ENCODE measurements at regions of chr1 and their contacts with region 1.

Region 1: GRCh38 chr1:24642481-24643361 is at the start of gene SRRM1:
- DNase-seq: peak; percentile 96 to 100 (median 99)
- ATAC-seq: peak; percentile 93
- H3K4me3 ChIP-seq: peak within 1 kb of the TSS; percentile 83
- H3K4me3 Mint-ChIP-seq: peak within 1 kb of the TSS; percentile 88 to 100 (median 95)
- H3K27ac ChIP-seq: peak within 1 kb of the TSS; percentile 100
- H3K27ac Mint-ChIP-seq: peak within 1 kb of the TSS; percentile 95 to 100 (median 99)
- H3K4me1 ChIP-seq: peaks cover 26 to 32% of the 10 kb centered on the region in 2 donors
- H3K4me1 Mint-ChIP-seq: peaks cover 26 to 58% (median 51%) of the 10 kb centered on the region in 7 donors
- H3K27me3 ChIP-seq: no peaks in the 10 kb centered on the region
- H3K27me3 Mint-ChIP-seq: peaks cover 0 to under 1% (median 0%) of the 10 kb centered on the region in 5 donors
- total RNA-seq, gene SRRM1: 188 to 342 (median 246) TPM

Region 2: DNA sequence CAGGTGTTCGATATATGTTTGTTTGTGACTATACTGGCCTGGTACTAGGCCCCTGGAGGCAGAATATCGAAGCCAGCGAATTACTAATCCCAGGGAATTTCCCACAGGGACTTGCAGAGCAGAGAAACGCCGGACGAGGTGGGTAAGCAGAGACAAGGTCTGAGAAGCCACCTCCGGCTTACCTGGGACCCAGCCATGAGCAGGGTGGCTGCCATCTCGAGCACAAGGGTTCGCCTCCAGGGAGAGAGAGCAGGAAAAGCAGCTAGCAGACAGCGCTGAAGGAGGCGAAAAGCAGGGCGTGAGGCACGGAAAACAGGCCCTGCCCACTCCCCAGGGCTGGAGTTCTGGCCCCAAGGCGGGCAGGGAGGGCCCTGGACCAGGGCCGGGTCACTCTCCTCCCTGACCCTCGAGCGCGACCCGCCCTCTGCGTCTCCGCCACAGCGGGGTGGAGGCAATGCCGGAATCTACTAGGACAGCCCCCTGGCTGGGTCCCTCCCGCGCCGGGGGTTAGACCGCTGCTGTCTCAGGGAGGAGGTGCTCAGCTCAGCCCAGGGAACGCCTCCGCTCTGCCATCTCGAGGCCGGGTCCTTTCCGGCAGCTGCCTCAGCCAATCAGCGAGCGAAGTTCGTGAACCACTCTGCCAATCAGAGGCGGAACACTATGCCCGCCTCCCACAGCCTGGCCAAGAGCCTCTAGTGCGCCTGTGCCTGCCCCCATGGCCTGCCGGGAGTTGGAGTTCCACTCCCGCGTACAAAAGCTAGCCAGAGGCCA is 1274.7 kb before region 1 on chr1:
- CTCF ChIA-PET with region 1: no interaction called
- POLR2A ChIA-PET with region 1: no interaction called
- intact Hi-C with region 1: loop called in 1 of 2 experiments (anchors 1 kb)
- DNase-seq: peak; percentile 84 to 98 (median 96)
- ATAC-seq: peak; percentile 95
- H3K4me3 ChIP-seq: peak overlapping the region; percentile 100
- H3K4me3 Mint-ChIP-seq: peak overlapping the region; percentile 87 to 100 (median 97)
- H3K27ac ChIP-seq: peak overlapping the region; percentile 91
- H3K27ac Mint-ChIP-seq: peak overlapping the region; percentile 93 to 99 (median 97)
- H3K4me1 ChIP-seq: peaks cover 6 to 8% of the 10 kb centered on the region in 2 donors
- H3K4me1 Mint-ChIP-seq: peaks cover 25 to 41% (median 36%) of the 10 kb centered on the region in 7 donors
- H3K27me3 ChIP-seq: no peaks in the 10 kb centered on the region
- H3K27me3 Mint-ChIP-seq: no peaks in the 10 kb centered on the region

Region 3: DNA sequence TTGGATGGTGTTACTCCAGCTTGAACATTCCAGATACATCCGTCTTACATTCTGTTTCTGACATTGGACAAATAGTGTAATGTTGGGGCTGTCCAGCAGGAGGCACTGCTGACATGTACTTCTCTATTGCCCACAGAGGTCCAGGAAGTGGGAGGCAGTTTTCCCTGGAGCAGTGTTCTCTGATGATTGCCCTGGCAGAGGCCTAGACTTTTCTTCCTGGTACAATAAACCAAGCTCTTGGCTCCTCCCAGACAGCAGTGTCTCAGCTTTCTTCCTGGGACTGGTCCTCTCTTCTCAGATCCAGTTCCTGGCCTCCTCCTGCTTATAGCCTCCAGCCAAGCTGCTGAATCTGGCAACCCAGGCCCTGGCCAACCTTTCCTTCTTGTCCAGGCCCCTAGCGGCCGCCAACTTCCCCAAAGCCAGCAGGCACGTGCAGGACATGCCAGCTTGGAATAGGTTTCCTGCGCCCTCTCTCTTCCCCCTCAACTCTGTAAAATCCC is 440.7 kb before region 1 on chr1:
- CTCF ChIA-PET with region 1: interaction called, 14 read pairs
- POLR2A ChIA-PET with region 1: no interaction called
- intact Hi-C with region 1: no loop called
- DNase-seq: peak in 7 of 9 donors; percentile 29 to 54 (median 42)
- ATAC-seq: peak; percentile 53
- H3K4me3 ChIP-seq: no peak overlapping the region
- H3K4me3 Mint-ChIP-seq: no peak overlapping the region
- H3K27ac ChIP-seq: no peak overlapping the region
- H3K27ac Mint-ChIP-seq: no peak overlapping the region
- H3K4me1 ChIP-seq: peaks cover 0 to 4% of the 10 kb centered on the region in 2 donors
- H3K4me1 Mint-ChIP-seq: peaks cover 0 to 16% (median 5%) of the 10 kb centered on the region in 7 donors
- H3K27me3 ChIP-seq: no peaks in the 10 kb centered on the region
- H3K27me3 Mint-ChIP-seq: peaks cover 0 to 5% (median 0%) of the 10 kb centered on the region in 5 donors

Region 4: DNA sequence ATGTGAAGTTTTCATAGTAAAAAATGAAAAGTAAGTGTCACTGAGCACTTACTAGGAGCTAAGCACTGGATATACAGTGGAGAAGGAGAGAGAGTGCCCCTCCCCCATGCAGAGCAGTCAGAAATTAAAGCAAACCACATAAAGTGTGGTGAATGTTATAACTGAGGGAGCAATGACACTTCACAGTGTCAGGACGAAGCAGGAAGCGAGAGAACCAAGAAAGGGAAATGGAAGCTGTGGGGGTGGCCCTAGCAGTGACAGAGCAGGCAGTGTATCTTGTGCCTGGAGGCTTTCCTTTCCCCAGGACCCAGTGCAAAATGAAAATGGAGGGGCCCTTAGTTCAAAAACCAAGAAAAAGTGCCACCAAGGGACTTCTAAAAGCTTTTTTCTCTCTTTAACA is 161.6 kb before region 1 on chr1:
- CTCF ChIA-PET with region 1: interaction called, 4 read pairs
- POLR2A ChIA-PET with region 1: no interaction called
- intact Hi-C with region 1: loop called (anchors 5 kb)
- DNase-seq: peak in 8 of 9 donors; percentile 50 to 80 (median 75)
- ATAC-seq: peak; percentile 84
- H3K4me3 ChIP-seq: peak overlapping the region; percentile 44
- H3K4me3 Mint-ChIP-seq: peak overlapping the region; percentile 74 to 95 (median 83)
- H3K27ac ChIP-seq: peak overlapping the region; percentile 83
- H3K27ac Mint-ChIP-seq: peak overlapping the region; percentile 93 to 99 (median 98)
- H3K4me1 ChIP-seq: peaks cover 49 to 59% of the 10 kb centered on the region in 2 donors
- H3K4me1 Mint-ChIP-seq: peaks cover 36 to 86% (median 77%) of the 10 kb centered on the region in 7 donors
- H3K27me3 ChIP-seq: no peaks in the 10 kb centered on the region
- H3K27me3 Mint-ChIP-seq: no peaks in the 10 kb centered on the region

Region 5: GRCh38 chr1:24744911-24745710 is 102.4 kb after region 1 on chr1 and contains the start of gene CLIC4:
- CTCF ChIA-PET with region 1: interaction called, 5 read pairs
- POLR2A ChIA-PET with region 1: interaction called, 3 read pairs
- intact Hi-C with region 1: loop called (anchors 1 kb)
- DNase-seq: peak; percentile 97 to 100 (median 98)
- ATAC-seq: peak; percentile 97
- H3K4me3 ChIP-seq: peak within 1 kb of the TSS; percentile 55
- H3K4me3 Mint-ChIP-seq: peak within 1 kb of the TSS; percentile 84 to 94 (median 89)
- H3K27ac ChIP-seq: peak within 1 kb of the TSS; percentile 57
- H3K27ac Mint-ChIP-seq: peak within 1 kb of the TSS; percentile 18 to 89 (median 79)
- H3K4me1 ChIP-seq: peaks cover 0 to 4% of the 10 kb centered on the region in 2 donors
- H3K4me1 Mint-ChIP-seq: peaks cover 7 to 57% (median 15%) of the 10 kb centered on the region in 7 donors
- H3K27me3 ChIP-seq: no peaks in the 10 kb centered on the region
- H3K27me3 Mint-ChIP-seq: peaks cover 0 to 10% (median 0%) of the 10 kb centered on the region in 5 donors
- total RNA-seq, gene CLIC4: 1.4 to 16.8 (median 5.1) TPM

Region 6: DNA sequence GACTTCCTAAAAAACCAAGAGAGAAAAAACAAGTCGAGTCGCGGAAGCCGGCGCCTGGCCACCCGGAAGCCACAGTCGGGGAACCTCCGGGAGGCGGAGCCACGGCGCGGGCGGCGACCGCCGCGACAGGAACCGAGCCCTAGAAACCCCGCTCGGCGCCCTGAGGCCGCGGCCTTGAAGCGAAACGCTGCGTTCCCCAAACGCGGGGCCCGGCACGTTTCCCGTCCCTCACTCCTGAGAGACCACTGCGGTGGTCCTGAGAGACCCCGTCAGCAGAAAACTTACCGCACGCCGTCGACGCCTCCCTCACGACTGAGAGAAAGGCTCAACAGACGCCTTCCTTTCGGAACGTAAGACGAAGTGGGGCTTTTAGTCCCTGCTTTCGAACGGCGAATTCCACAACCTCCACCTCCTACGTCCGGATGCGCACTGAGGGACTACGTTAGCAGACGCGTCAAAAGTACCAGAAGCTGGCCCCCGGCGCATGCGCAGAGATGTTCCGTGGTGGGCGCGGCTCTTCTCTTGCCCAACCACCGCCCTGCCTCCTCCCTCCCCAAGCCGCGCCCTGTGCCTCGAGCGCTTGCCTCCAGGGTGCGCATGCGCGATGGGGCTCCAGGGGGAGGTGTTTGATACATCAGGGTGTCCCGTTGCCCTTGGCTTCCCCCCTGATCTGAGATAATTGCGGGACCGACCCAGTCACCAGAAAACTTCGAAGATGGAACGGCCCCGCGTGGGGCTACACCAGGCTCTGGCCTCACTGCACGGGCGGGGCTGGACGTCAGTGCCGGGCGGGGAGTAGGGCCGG is 604.5 kb after region 1 on chr1 and contains the start of gene RSRP1:
- CTCF ChIA-PET with region 1: no interaction called
- POLR2A ChIA-PET with region 1: no interaction called
- intact Hi-C with region 1: loop called in 1 of 2 experiments (anchors 1 kb)
- DNase-seq: peak; percentile 99 to 100 (median 99)
- ATAC-seq: peak; percentile 91
- H3K4me3 ChIP-seq: peak within 1 kb of the TSS; percentile 94
- H3K4me3 Mint-ChIP-seq: peak within 1 kb of the TSS; percentile 96 to 99 (median 97)
- H3K27ac ChIP-seq: peak within 1 kb of the TSS; percentile 98
- H3K27ac Mint-ChIP-seq: peak within 1 kb of the TSS; percentile 98 to 100 (median 100)
- H3K4me1 ChIP-seq: peaks cover 30 to 35% of the 10 kb centered on the region in 2 donors
- H3K4me1 Mint-ChIP-seq: peaks cover 28 to 65% (median 51%) of the 10 kb centered on the region in 7 donors
- H3K27me3 ChIP-seq: no peaks in the 10 kb centered on the region
- H3K27me3 Mint-ChIP-seq: peaks cover 0 to 8% (median 0%) of the 10 kb centered on the region in 5 donors
- total RNA-seq, gene RSRP1: 230 to 449 (median 425) TPM